ENCODE measurements at regions of chr17 and their contacts with region 1.

Region 1: GRCh38 chr17:76384222-76384986 is at the start of gene SPHK1:
- DNase-seq: peak; percentile 91
- H3K4me3 ChIP-seq: peak within 1 kb of the TSS; percentile 53 to 78
- H3K27ac ChIP-seq: peak within 1 kb of the TSS in 1 of 2 experiments; percentile 80; a peak in 2 of 4 replicates
- H3K4me1 ChIP-seq: peaks cover 0 to 40% of the 10 kb centered on the region in 2 experiments; a peak in 1 of 4 replicates
- H3K27me3 ChIP-seq: no peaks in the 10 kb centered on the region
- CTCF ChIP-seq: no peak
- EP300 ChIP-seq: no peak
- RAD21 ChIP-seq: no peak
- polyA plus RNA-seq, gene SPHK1: 7.7 and 12.3 TPM in 2 replicates

Region 2: GRCh38 chr17:75878174-75878998 is 506.0 kb before region 1 on chr17 and contains the start of gene TRIM47:
- CTCF ChIA-PET with region 1: no interaction called
- POLR2A ChIA-PET with region 1: no interaction called
- DNase-seq: peak; percentile 81
- H3K4me3 ChIP-seq: peak within 1 kb of the TSS; percentile 34 to 49
- H3K27ac ChIP-seq: peak within 1 kb of the TSS in 1 of 2 experiments; percentile 87; a peak in 1 of 4 replicates
- H3K4me1 ChIP-seq: peaks cover 22 to 28% of the 10 kb centered on the region in 2 experiments; a peak in 3 of 4 replicates
- H3K27me3 ChIP-seq: no peaks in the 10 kb centered on the region
- CTCF ChIP-seq: no peak
- EP300 ChIP-seq: no peak
- RAD21 ChIP-seq: no peak
- polyA plus RNA-seq, gene TRIM47: 3.1 and 5.1 TPM in 2 replicates

Region 3: DNA sequence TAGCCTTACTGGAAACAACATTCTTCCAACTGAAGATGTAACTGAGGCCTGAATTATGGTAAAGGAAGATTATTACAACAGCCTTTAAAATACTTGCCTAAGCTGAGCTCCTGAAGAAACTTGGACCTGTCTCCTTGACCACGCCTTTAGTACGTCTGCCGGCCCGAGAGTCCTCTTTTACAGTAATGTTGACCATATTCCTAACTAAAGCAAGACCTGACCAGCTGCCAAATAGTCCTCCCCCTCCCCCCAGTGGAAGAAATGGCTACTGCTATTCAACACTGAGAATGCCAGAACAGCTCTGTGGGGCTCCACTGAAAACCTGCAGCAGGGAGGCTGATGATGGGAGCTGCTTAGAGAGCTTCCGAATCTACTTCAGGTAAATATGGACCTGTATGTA is 230.8 kb before region 1 on chr17:
- CTCF ChIA-PET with region 1: no interaction called
- POLR2A ChIA-PET with region 1: no interaction called
- DNase-seq: no peak
- H3K4me3 ChIP-seq: no peak overlapping the region
- H3K27ac ChIP-seq: no peak overlapping the region
- H3K4me1 ChIP-seq: no peaks in the 10 kb centered on the region
- H3K27me3 ChIP-seq: no peaks in the 10 kb centered on the region
- CTCF ChIP-seq: peak; percentile 37
- EP300 ChIP-seq: no peak
- RAD21 ChIP-seq: no peak; the same call in 1 of the 2 replicates

Region 4: GRCh38 chr17:76296186-76296585 is 88.2 kb before region 1 on chr17:
- CTCF ChIA-PET with region 1: interaction called, 303 read pairs
- POLR2A ChIA-PET with region 1: no interaction called
- DNase-seq: no peak
- H3K4me3 ChIP-seq: no peak overlapping the region
- H3K27ac ChIP-seq: no peak overlapping the region
- H3K4me1 ChIP-seq: no peaks in the 10 kb centered on the region
- H3K27me3 ChIP-seq: no peaks in the 10 kb centered on the region
- CTCF ChIP-seq: no peak
- EP300 ChIP-seq: no peak
- RAD21 ChIP-seq: no peak

Region 5: GRCh38 chr17:76327696-76328095 is 56.7 kb before region 1 on chr17:
- CTCF ChIA-PET with region 1: interaction called, 30 read pairs
- POLR2A ChIA-PET with region 1: no interaction called
- DNase-seq: no peak
- H3K4me3 ChIP-seq: no peak overlapping the region
- H3K27ac ChIP-seq: no peak overlapping the region
- H3K4me1 ChIP-seq: peaks cover 0 to 3% of the 10 kb centered on the region in 2 experiments; a peak in 1 of 4 replicates
- H3K27me3 ChIP-seq: no peaks in the 10 kb centered on the region
- CTCF ChIP-seq: no peak
- EP300 ChIP-seq: no peak
- RAD21 ChIP-seq: no peak

Region 6: DNA sequence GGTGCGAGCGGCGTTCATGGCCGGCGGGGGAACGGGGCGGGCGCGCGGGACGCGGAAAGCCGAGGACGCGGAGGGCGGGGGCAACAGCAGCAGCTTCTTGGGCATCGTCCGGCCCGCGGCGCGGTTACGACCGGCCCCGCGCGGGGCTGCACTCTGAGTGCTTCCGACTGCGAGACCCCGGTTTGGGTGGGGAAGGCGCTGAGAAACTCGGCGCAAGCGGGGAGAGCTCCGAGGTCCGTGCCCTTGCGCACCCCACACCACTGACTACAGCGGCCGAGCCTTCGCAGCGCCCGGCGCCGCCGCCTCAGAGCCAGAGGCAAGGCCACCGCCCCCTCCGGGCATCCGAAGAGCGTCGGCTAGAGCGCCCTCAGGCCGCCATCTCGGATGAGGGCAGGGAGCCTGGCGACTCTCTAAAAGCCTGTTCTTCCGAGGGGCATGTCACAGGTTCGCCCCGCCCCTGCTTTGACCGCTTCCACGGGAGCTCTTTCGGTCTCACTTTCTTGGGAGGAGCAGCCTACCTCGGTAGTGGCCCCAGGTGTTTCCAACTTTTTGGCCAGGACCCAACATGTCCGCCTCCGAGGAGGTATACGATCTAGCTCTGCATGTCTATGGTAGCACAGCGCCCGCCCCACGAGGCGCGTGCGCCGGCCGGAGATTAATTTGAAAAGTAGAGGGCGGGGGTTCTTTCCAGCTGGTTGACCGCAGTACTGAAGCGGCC is 30.6 kb before region 1 on chr17 and contains the start of gene PRPSAP1:
- CTCF ChIA-PET with region 1: interaction called, 128 read pairs
- POLR2A ChIA-PET with region 1: interaction called, 39 read pairs
- DNase-seq: peak; percentile 97
- H3K4me3 ChIP-seq: peak within 1 kb of the TSS; percentile 65 to 87
- H3K27ac ChIP-seq: peak within 1 kb of the TSS; percentile 83 to 90
- H3K4me1 ChIP-seq: peaks cover 7 to 10% of the 10 kb centered on the region in 2 experiments; a peak in 2 of 4 replicates
- H3K27me3 ChIP-seq: no peaks in the 10 kb centered on the region
- CTCF ChIP-seq: peak; percentile 21
- EP300 ChIP-seq: 0 out of 4 replicates have a peak, but pooled peaks of 1 of the 2 experiments have one; percentile 19
- RAD21 ChIP-seq: no peak
- polyA plus RNA-seq, gene PRPSAP1: 118 and 125 TPM in 2 replicates

Region 7: GRCh38 chr17:76408052-76408849 is 23.8 kb after region 1 on chr17:
- CTCF ChIA-PET with region 1: interaction called, 186 read pairs
- POLR2A ChIA-PET with region 1: interaction called, 3 read pairs
- DNase-seq: peak; percentile 82
- H3K4me3 ChIP-seq: no peak overlapping the region; a peak in 1 of 4 replicates
- H3K27ac ChIP-seq: no peak overlapping the region
- H3K4me1 ChIP-seq: peaks cover 0 to 16% of the 10 kb centered on the region in 2 experiments; a peak in 2 of 4 replicates
- H3K27me3 ChIP-seq: no peaks in the 10 kb centered on the region
- CTCF ChIP-seq: peak; percentile 99
- EP300 ChIP-seq: no peak
- RAD21 ChIP-seq: peak; percentile 92

Region 8: GRCh38 chr17:76501018-76501826 is 116.8 kb after region 1 on chr17 and contains the start of gene RHBDF2:
- CTCF ChIA-PET with region 1: interaction called, 12 read pairs
- POLR2A ChIA-PET with region 1: no interaction called
- DNase-seq: peak; percentile 97
- H3K4me3 ChIP-seq: peak within 1 kb of the TSS; percentile 65 to 78
- H3K27ac ChIP-seq: peak within 1 kb of the TSS in 1 of 2 experiments; percentile 30; a peak in 1 of 4 replicates
- H3K4me1 ChIP-seq: peaks cover 21 to 50% of the 10 kb centered on the region in 2 experiments; a peak in 3 of 4 replicates
- H3K27me3 ChIP-seq: no peaks in the 10 kb centered on the region
- CTCF ChIP-seq: no peak
- EP300 ChIP-seq: no peak
- RAD21 ChIP-seq: no peak
- polyA plus RNA-seq, gene RHBDF2: 14.0 and 16.1 TPM in 2 replicates